Sigmoid colon (tissue), 7 donors: ENCODE measurements at regions of chr22 and their contacts with region 1.

Region 1: GRCh38 chr22:38069372-38070249 is 12.4 kb downstream of the PICK1 start:
- DNase-seq: peak; percentile 94
- H3K4me3 ChIP-seq: peak overlapping the region in 1 of 4 donors; percentile 23
- H3K27ac ChIP-seq: peak overlapping the region; percentile 75 to 90 (median 80)
- H3K4me1 ChIP-seq: peaks cover 0 to 28% (median 26%) of the 10 kb centered on the region in 4 donors
- H3K27me3 ChIP-seq: no peaks in the 10 kb centered on the region
- CTCF ChIP-seq: peak; percentile 40 to 71 (median 62)
- EP300 ChIP-seq: peak in 2 of 4 donors; percentile 42 to 69
- POLR2A ChIP-seq: no peak

Region 2: GRCh38 chr22:37972527-37972926 is 97.1 kb before region 1 on chr22:
- intact Hi-C with region 1: no loop called
- DNase-seq: no peak
- H3K4me3 ChIP-seq: no peak overlapping the region
- H3K27ac ChIP-seq: no peak overlapping the region
- H3K4me1 ChIP-seq: peaks cover 0 to 4% (median 0%) of the 10 kb centered on the region in 4 donors
- H3K27me3 ChIP-seq: no peaks in the 10 kb centered on the region
- CTCF ChIP-seq: no peak
- EP300 ChIP-seq: no peak
- POLR2A ChIP-seq: no peak

Region 3: GRCh38 chr22:38104084-38104483 is 34.5 kb after region 1 on chr22:
- intact Hi-C with region 1: loop called (anchors 5 kb)
- DNase-seq: no peak
- H3K4me3 ChIP-seq: no peak overlapping the region
- H3K27ac ChIP-seq: no peak overlapping the region
- H3K4me1 ChIP-seq: no peaks in the 10 kb centered on the region
- H3K27me3 ChIP-seq: no peaks in the 10 kb centered on the region
- CTCF ChIP-seq: peak; percentile 16 to 48 (median 36)
- EP300 ChIP-seq: no peak
- POLR2A ChIP-seq: no peak

Region 4: GRCh38 chr22:38176170-38176741 is 106.6 kb after region 1 on chr22:
- intact Hi-C with region 1: loop called (anchors 2 kb)
- DNase-seq: peak; percentile 91
- H3K4me3 ChIP-seq: no peak overlapping the region
- H3K27ac ChIP-seq: peak overlapping the region; percentile 76 to 87 (median 78)
- H3K4me1 ChIP-seq: peaks cover 0 to 39% (median 27%) of the 10 kb centered on the region in 4 donors
- H3K27me3 ChIP-seq: no peaks in the 10 kb centered on the region
- CTCF ChIP-seq: no peak
- EP300 ChIP-seq: peak in 2 of 4 donors; percentile 68 to 84
- POLR2A ChIP-seq: no peak